ENCODE measurements at regions of chr11 and their contacts with region 1.

Region 1: DNA sequence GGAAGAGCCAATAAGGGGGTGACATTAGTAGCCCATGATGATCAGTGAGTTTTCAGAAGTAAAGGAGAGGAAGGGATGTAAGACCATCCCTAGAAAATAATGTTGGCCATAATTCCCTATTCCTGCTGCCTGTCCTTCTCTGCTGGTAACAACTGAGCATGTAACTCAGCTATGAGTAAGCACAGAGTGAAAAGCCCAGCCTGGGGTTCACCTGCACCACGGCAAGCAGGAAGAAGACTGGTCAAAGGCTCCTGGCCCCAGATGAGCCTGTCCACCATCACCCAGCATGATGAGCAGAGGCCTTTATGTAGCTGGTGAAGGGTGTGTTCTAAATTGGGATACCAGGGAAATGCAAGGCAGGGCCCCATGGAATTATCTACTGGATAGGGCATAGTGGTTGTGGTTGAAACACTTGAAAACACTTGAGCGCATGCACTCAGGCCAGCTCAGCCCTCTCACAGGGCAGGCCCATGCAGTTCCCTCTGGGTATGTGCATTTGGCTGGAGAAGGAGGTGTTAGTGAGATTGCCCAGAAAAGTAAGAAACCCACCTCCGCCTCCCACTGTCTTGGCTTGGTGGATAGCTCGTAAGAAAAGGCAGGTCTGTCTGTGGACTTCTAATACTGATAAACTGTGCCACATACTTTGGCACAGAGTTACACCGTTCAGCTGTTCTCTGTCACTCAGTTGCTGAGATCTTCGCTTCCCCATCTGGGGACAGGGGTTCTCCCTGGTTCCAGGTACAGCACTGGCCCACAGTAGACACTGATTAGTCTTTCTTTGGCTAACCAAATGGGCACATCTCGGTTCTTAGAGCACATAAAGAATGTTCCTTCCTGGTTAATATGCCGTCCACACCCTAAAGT is 86.8 kb downstream of the AMOTL1 start:
- DNase-seq: no peak

Region 2: GRCh38 chr11:94762208-94762607 is 92.8 kb before region 1 on chr11:
- intact Hi-C with region 1: no loop called
- DNase-seq: no peak

Region 3: GRCh38 chr11:94794287-94795168 is 60.5 kb before region 1 on chr11:
- intact Hi-C with region 1: loop called (anchors 2 kb)
- DNase-seq: peak; percentile 77

Region 4: DNA sequence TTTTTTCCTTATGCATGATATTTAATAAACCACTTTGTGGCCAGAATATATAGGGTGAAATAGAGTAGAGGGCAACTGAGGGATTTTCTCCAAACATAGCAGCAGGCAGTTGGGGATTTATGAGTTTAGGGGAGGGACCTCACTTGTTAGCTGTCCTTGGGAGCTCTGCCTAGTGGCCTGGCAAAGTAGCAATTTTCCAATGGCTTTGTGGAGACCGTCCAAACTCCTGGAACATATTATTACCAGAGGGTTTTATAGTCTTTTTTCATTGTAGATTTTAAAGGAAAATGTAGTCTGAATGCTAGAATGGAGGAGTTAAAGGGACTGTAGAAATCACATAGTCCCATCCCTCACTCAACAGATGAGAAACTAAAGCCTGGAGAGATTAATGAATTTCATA is 54.6 kb before region 1 on chr11:
- intact Hi-C with region 1: loop called (anchors 2 kb)
- DNase-seq: no peak

Region 5: GRCh38 chr11:94823102-94823732 is 31.8 kb before region 1 on chr11:
- intact Hi-C with region 1: no loop called
- DNase-seq: no peak

Region 6: GRCh38 chr11:94834911-94835593 is 19.9 kb before region 1 on chr11:
- intact Hi-C with region 1: loop called (anchors 2 kb)
- DNase-seq: no peak

Region 7: DNA sequence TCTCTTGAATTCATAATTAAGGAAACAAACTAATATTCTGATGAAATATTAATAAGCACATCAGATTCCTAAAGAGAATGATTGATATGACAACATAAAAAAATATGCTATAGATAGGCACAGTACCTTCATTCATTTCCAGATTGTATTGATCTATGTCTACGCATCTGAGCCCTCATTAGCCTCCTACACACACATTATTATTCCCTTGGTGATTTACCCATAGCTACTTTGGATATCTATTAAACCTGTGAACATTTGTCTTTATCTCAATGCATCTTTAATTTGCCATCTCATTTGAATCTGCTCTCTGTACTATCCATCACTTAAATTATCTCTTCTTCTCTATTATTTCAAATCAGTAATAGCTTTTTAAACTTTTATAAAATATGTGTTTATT is 357.6 kb after region 1 on chr11:
- intact Hi-C with region 1: no loop called
- DNase-seq: no peak